Naive thymus-derived CD4-positive, alpha-beta T cell (primary cell): ENCODE measurements at regions of chr5 and their contacts with region 1.

Region 1: GRCh38 chr5:40798012-40798855 is at the start of gene PRKAA1:
- DNase-seq: peak; percentile 86 to 92 (median 91)
- ATAC-seq: peak; percentile 98
- H3K4me3 ChIP-seq: peak within 1 kb of the TSS; percentile 98
- H3K4me3 Mint-ChIP-seq: peak within 1 kb of the TSS; percentile 86 to 96 (median 94)
- H3K27ac ChIP-seq: peak within 1 kb of the TSS; percentile 91
- H3K27ac Mint-ChIP-seq: peak within 1 kb of the TSS; percentile 74 to 96 (median 94)
- H3K4me1 ChIP-seq: peaks cover 12 to 16% of the 10 kb centered on the region in 2 donors
- H3K4me1 Mint-ChIP-seq: peaks cover 28 to 55% (median 44%) of the 10 kb centered on the region in 7 donors
- H3K27me3 ChIP-seq: no peaks in the 10 kb centered on the region
- H3K27me3 Mint-ChIP-seq: peaks cover 0 to 17% (median 0%) of the 10 kb centered on the region in 5 donors
- total RNA-seq, gene PRKAA1: 65.5 to 103 (median 98.1) TPM

Region 2: GRCh38 chr5:40781843-40782409 is 16.3 kb before region 1 on chr5:
- CTCF ChIA-PET with region 1: no interaction called
- POLR2A ChIA-PET with region 1: no interaction called
- intact Hi-C with region 1: loop called in 1 of 2 experiments (anchors 2 kb)
- DNase-seq: no peak
- ATAC-seq: no peak
- H3K4me3 ChIP-seq: no peak overlapping the region
- H3K4me3 Mint-ChIP-seq: no peak overlapping the region
- H3K27ac ChIP-seq: no peak overlapping the region
- H3K27ac Mint-ChIP-seq: no peak overlapping the region
- H3K4me1 ChIP-seq: peaks cover 10% of the 10 kb centered on the region in 2 donors
- H3K4me1 Mint-ChIP-seq: peaks cover 18 to 76% (median 72%) of the 10 kb centered on the region in 7 donors
- H3K27me3 ChIP-seq: no peaks in the 10 kb centered on the region
- H3K27me3 Mint-ChIP-seq: no peaks in the 10 kb centered on the region

Region 3: GRCh38 chr5:41032973-41033372 is 234.7 kb after region 1 on chr5:
- CTCF ChIA-PET with region 1: no interaction called
- POLR2A ChIA-PET with region 1: no interaction called
- intact Hi-C with region 1: no loop called
- DNase-seq: no peak
- ATAC-seq: no peak
- H3K4me3 ChIP-seq: no peak overlapping the region
- H3K4me3 Mint-ChIP-seq: no peak overlapping the region
- H3K27ac ChIP-seq: no peak overlapping the region
- H3K27ac Mint-ChIP-seq: no peak overlapping the region
- H3K4me1 ChIP-seq: no peaks in the 10 kb centered on the region
- H3K4me1 Mint-ChIP-seq: no peaks in the 10 kb centered on the region
- H3K27me3 ChIP-seq: no peaks in the 10 kb centered on the region
- H3K27me3 Mint-ChIP-seq: no peaks in the 10 kb centered on the region